PC-3 (cell line): ENCODE measurements at regions of chr10 and their contacts with region 1.

Region 1: GRCh38 chr10:60208676-60209269 is 180.9 kb downstream of the ANK3 start:
- DNase-seq: peak; percentile 87
- ATAC-seq: peak; percentile 57
- H3K4me3 ChIP-seq: no peak overlapping the region
- H3K27ac ChIP-seq: no peak overlapping the region
- H3K4me1 ChIP-seq: peaks cover 22% of the 10 kb centered on the region
- H3K27me3 ChIP-seq: no peaks in the 10 kb centered on the region
- CTCF ChIP-seq: peak; percentile 100

Region 2: GRCh38 chr10:59865101-59865500 is 343.7 kb before region 1 on chr10:
- CTCF ChIA-PET with region 1: no interaction called
- POLR2A ChIA-PET with region 1: no interaction called
- intact Hi-C with region 1: loop called (anchors 10 kb)
- DNase-seq: peak; percentile 90
- ATAC-seq: peak; percentile 81
- H3K4me3 ChIP-seq: no peak overlapping the region
- H3K27ac ChIP-seq: no peak overlapping the region
- H3K4me1 ChIP-seq: peaks cover 19% of the 10 kb centered on the region
- H3K27me3 ChIP-seq: no peaks in the 10 kb centered on the region
- CTCF ChIP-seq: peak; percentile 93

Region 3: DNA sequence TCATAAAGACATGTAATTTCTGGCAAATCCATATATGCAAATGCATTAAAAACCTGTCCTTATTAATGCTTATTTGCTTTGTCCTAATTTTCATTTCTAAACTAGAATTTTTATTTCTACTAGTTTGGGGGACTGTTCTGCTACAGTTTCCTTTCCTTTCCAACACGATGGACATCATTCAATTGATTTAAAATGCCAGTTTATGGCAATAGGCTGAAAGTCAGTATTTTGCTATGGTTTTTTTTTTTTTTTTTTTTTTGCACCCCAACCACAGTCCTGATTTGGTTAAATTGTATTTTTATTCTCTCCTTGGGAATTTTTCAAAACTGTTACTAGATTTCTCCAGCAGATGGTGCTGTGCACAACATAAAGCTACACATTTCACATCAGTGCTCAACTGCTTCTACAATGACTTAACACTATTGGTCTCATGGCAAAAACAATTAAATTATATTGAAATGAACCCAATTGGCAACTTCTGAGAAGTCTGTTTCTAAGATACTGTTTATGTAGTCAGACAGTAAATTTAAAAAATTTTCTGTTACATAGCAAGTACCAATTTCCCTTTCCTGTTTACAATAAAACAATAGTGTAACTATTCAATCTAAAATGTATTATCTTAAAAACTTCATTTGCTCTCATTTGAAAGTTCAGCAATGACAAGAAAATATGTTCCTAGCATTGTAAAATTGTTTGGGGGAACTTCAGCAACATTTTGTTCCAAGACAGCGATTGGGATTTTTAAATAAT is 108.6 kb before region 1 on chr10:
- CTCF ChIA-PET with region 1: interaction called, 25 read pairs
- POLR2A ChIA-PET with region 1: no interaction called
- intact Hi-C with region 1: loop called (anchors 1 kb)
- DNase-seq: peak; percentile 88
- ATAC-seq: peak; percentile 61
- H3K4me3 ChIP-seq: no peak overlapping the region
- H3K27ac ChIP-seq: no peak overlapping the region
- H3K4me1 ChIP-seq: peaks cover 14% of the 10 kb centered on the region
- H3K27me3 ChIP-seq: no peaks in the 10 kb centered on the region
- CTCF ChIP-seq: peak; percentile 92

Region 4: GRCh38 chr10:60140651-60141632 is 67.8 kb before region 1 on chr10:
- CTCF ChIA-PET with region 1: interaction called, 6 read pairs
- POLR2A ChIA-PET with region 1: interaction called, 4 read pairs
- intact Hi-C with region 1: loop called (anchors 1 kb)
- DNase-seq: peak; percentile 81
- ATAC-seq: peak; percentile 81
- H3K4me3 ChIP-seq: peak overlapping the region; percentile 59
- H3K27ac ChIP-seq: peak overlapping the region; percentile 88
- H3K4me1 ChIP-seq: peaks cover 70% of the 10 kb centered on the region
- H3K27me3 ChIP-seq: no peaks in the 10 kb centered on the region
- CTCF ChIP-seq: 0 out of 2 replicates have a peak, but pooled peaks have one; percentile 7

Region 5: DNA sequence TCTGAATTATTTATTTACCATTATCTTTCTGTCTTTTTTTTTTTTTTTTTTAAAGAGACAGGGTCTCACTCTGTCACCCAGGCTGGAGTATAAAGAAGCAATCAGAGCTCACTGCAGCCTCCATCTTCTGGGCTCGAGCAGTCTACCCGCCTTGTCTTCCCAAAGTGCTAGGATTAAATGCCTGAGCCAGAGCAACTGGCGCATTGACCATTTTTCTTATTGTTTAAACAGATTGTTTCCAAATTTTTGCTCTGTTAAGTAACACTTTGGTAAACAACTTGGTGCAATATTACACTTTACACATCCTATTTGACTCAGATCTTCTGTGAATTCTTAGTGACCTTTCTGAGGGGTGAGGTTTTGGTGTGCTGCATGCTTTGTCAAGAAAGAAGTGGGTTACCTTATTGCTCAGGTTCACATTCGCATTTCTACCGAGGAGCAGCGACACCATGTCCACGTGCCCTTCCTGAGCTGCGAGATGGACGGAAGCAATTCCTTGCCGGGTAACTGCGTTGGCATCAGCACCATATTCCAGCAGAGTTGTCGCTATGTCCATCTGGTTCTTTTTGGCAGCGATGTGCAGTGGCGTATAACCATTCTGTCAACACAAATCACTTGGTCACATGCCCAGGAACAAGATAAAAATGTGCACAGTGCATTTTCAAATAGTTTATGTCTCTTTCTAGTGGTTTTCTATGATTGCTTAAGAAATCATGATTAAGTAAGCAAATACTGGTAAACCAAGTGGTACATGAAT is 22.3 kb before region 1 on chr10:
- CTCF ChIA-PET with region 1: interaction called, 15 read pairs
- POLR2A ChIA-PET with region 1: no interaction called
- intact Hi-C with region 1: loop called (anchors 2 kb)
- DNase-seq: peak; percentile 98
- ATAC-seq: peak; percentile 80
- H3K4me3 ChIP-seq: peak overlapping the region; percentile 44
- H3K27ac ChIP-seq: peak overlapping the region; percentile 86
- H3K4me1 ChIP-seq: peaks cover 42% of the 10 kb centered on the region
- H3K27me3 ChIP-seq: no peaks in the 10 kb centered on the region
- CTCF ChIP-seq: no peak